Prostate gland (tissue), 2 donors: ENCODE measurements at regions of chr22 and their contacts with region 1.

Region 1: DNA sequence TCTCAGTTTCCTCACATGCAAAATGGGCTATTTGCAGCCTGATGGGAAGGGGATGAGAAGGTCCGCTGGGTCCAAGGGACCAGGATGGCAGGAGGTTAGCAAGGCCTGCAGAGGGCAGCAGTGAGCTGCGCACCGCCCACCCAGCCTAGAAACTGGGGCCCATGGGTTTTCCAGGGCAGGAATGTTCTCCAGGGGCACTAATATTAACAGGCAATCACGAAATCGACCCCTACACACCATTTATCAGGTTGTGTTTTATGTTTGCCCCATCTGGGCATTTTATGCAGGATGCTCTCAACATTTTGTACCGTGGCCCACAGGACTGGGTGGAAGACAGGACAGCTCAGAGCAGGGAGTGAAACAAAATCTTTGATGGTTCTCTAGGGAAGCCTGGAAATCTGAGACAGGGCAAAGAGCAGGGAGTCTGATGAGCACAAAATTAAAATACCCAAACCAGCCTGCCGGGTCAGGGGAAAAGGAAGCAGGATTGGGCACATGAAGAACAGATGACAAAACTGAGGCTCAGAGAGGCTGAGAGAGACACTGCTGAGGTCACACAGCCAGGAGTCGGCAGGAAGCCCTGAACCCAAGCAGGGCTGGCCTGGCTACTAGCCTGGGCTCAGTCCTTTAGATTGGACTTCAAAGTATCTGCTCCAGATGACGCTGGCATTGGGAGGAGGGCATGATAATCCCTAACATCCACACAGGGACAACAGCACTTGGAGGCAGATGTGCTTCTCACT is 1.6 kb upstream of the BCR start:
- DNase-seq: peak; percentile 47
- H3K4me3 ChIP-seq: no peak overlapping the region
- H3K27ac ChIP-seq: peak overlapping the region; percentile 73 to 75
- H3K4me1 ChIP-seq: peaks cover 17% of the 10 kb centered on the region
- H3K27me3 ChIP-seq: no peaks in the 10 kb centered on the region
- CTCF ChIP-seq: peak; percentile 96 to 98 (median 96)
- POLR2A ChIP-seq: no peak

Region 2: GRCh38 chr22:23281406-23282088 is 102.9 kb after region 1 on chr22:
- intact Hi-C with region 1: loop called (anchors 1 kb)
- DNase-seq: peak; percentile 85
- H3K4me3 ChIP-seq: no peak overlapping the region
- H3K27ac ChIP-seq: peak overlapping the region; percentile 78 to 81
- H3K4me1 ChIP-seq: peaks cover 15% of the 10 kb centered on the region
- H3K27me3 ChIP-seq: no peaks in the 10 kb centered on the region
- CTCF ChIP-seq: peak; percentile 78 to 98 (median 96)
- POLR2A ChIP-seq: no peak

Region 3: DNA sequence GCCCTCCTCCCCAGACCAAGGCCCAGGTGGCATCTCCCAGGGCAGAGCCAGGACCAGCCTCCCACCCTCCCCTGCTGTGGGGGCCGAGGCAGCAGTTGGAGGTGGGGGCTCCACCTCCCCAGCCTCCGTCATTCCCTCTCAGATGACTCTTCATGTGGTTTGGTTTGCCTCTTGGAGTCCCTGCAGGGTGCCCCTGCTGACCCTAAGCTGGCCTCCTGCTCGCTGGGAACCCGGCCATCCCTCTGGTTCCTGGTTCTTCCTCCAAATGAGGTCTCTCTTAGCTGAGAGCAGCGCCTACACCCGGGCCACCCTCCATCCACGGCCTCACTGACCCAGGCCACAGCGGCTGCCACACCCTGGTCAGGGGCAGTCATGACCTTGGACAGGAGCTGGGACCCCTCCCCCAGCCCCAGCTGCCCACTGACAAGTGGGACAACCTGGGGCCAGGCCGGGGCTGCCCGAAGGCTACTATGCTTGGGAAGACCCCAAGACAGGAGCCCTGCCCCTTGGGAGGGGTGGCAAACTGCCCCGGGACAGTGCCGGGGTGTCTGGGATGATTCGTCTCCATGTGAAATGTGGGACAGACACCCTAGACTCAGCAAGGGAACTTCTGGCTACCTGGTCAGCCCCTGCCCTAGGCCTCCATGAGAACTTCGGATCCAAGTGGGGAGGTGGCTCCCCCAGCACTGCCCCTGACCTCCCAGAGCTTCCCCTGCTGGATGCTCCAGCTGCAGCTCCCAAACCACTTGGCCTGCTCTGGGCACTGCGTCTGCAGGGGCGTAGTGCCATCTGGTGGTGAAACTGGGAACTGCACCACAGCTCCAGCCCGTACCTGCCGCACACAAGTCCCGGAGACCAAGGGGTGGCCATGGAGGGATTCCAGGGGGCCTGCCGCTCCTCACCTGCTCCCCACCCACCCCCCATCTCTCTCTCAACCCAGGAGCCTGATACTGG is 206.9 kb after region 1 on chr22:
- intact Hi-C with region 1: loop called (anchors 5 kb)
- DNase-seq: peak; percentile 82
- H3K4me3 ChIP-seq: no peak overlapping the region
- H3K27ac ChIP-seq: no peak overlapping the region
- H3K4me1 ChIP-seq: no peaks in the 10 kb centered on the region
- H3K27me3 ChIP-seq: no peaks in the 10 kb centered on the region
- CTCF ChIP-seq: peak; percentile 98 to 99 (median 99)
- POLR2A ChIP-seq: no peak

Region 4: DNA sequence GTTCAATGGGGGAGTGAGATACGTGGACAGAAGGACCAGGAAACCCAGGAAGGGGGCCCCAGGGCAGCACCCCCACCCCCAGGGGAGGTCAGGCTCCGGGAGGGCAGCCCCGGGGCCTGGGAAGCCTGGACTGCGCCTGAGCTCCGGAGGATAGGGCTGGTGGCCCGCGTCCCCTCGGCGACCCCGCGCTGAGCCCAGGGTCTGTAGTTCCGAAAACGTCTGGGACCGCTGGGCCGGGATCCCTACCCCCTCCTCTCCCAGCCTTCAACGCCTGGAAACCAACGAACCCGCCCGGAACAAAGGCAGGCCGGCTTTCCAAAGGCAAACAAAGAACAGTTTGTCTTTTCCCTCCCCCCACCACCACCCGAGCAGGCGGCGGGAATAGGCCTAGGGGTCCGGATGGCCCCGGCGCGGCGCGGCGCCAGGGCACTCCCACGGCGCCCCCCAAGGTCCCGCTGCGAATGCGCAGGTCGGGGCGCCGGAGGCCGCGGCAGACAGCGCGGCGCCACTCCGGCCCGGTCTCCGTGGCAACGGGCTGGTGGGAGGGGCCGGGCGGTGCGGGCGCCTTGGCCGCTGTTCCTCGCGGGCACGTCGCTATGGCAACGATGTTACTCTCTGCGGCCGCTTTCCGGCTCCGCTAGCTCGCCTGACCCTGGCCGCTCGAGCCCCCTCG is 342.9 kb after region 1 on chr22:
- intact Hi-C with region 1: loop called (anchors 5 kb)
- DNase-seq: peak; percentile 94
- H3K4me3 ChIP-seq: peak overlapping the region; percentile 26 to 28
- H3K27ac ChIP-seq: peak overlapping the region; percentile 98 to 99
- H3K4me1 ChIP-seq: peaks cover 23% of the 10 kb centered on the region
- H3K27me3 ChIP-seq: no peaks in the 10 kb centered on the region
- CTCF ChIP-seq: peak in 2 of 4 experiments; percentile 31 to 34
- POLR2A ChIP-seq: peak; percentile 43